ENCODE measurements at regions of chr3 and their contacts with region 1.

Region 1: DNA sequence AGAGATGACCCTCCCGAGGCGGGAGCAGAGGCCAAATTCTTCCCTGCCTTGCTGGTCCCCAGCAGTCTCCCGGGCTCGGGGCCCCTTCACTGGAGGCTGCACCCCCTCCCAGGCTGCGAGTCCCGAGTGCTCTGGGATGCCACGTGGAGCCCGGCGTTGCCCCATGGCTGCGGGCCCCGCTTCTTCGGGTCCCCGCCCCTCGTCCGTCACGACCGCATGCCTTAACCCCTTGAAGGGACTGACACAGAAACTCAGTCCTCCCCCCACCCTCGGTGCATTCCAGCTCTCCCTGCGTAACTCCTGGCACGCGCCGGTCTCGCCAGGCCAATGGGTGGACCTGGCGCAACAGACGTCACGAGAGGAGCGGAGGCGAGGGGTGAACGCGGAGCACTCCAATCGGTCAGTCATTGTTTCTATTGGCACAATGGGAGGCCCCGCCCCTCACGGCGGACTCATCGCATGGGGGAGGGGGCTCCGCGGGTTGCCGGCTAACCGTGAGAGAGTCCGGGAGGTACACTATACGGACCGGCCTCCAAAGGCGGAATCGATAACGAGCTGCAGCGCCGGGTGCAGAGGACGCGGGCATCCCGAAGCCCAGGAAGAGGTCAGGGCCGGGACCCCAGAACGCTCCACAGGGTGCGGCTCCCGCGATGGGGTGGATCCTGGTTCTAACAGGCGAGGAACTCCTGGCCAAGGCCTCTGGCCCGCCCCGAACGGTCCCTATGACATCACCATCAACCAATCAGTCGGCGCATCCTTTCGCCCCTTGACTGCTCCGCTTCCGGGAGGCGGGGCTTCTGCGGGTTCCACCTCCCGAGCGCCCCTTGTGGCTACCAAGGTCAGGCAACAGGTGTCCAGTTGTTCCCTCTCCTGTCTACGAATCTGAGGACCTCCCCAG is 978 bp upstream of the CELSR3 start:
- DNase-seq: peak; percentile 98
- H3K4me3 Mint-ChIP-seq: peak overlapping the region; percentile 96
- H3K27ac Mint-ChIP-seq: peak overlapping the region; percentile 98
- H3K4me1 Mint-ChIP-seq: peaks cover 11% of the 10 kb centered on the region
- H3K27me3 Mint-ChIP-seq: peaks cover 9% of the 10 kb centered on the region

Region 2: DNA sequence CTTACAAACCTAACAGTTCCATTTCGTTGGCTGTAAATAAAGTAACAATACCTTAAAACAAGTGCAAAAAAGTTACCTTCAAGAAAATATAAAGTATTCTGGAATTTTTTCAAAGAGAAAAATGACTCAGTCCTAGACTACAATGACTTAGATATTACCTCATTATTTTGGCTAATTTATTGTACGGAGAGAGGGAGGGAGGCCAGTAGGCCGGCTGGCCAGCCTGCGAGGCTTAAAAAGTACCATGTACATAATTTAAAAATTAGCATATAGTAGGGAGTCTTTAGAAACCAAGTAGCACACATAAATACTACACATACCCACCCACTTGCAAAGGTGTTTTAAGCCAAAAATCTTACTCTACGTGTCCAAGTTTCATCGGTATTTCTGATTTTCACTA is 605.6 kb before region 1 on chr3:
- intact Hi-C with region 1: no loop called
- DNase-seq: no peak
- H3K4me3 Mint-ChIP-seq: no peak overlapping the region
- H3K27ac Mint-ChIP-seq: no peak overlapping the region
- H3K4me1 Mint-ChIP-seq: peaks cover 13% of the 10 kb centered on the region
- H3K27me3 Mint-ChIP-seq: no peaks in the 10 kb centered on the region

Region 3: DNA sequence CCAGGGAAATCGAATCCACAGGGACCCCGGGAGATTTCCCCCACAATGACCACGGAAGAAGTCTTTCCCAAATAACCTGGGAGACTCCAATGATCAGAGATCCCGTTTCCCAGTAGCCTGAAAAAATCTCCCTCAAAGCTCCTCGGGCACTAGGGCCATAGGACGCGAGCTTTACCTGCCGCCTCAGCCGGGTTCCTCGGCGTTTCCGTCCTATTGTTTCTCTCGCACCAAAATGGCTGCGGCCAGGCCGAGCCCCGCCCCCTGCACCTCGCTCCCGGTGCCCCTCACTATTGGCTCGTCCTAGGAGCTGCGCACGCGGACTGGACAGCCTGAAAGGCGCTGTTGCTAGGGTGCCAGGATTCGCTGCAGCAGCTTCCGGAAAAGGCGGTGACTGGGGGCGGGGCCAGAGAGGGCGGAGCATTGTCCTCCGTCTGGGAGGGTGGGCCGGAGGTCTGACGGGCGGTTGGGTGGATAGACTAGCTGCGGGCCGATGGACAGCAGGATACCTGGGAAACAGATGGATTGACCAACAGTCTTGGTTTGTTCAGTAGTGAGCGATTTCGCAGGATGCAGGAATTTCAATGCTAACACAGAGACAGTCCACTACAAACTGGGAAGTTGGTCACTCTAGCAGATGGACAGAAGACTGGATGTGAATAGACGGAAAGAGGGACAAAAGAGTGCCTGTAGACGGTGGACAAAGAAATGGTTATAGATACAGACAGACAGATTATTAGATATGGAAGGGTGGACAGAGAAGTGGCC is 53.5 kb after region 1 on chr3 and contains the start of gene IP6K2:
- intact Hi-C with region 1: loop called (anchors 2 kb)
- DNase-seq: peak; percentile 100
- H3K4me3 Mint-ChIP-seq: peak within 1 kb of the TSS; percentile 98
- H3K27ac Mint-ChIP-seq: peak within 1 kb of the TSS; percentile 98
- H3K4me1 Mint-ChIP-seq: peaks cover 29% of the 10 kb centered on the region
- H3K27me3 Mint-ChIP-seq: peaks cover 22% of the 10 kb centered on the region
- total RNA-seq, gene IP6K2: 57.9 and 58.4 TPM in 2 replicates

Measured in activated CD4-positive, alpha-beta T cell treated with anti-CD3 and anti-CD28 coated beads, Interleukin-2, amount 10 ng/mL, durations not matched to agents 24 days and 14 days (primary cell).